AG04450 (cell line): ENCODE measurements at regions of chr14 and their contacts with region 1.

Region 1: GRCh38 chr14:76918751-76919543 is 92.7 kb downstream of the LRRC74A start:
- DNase-seq: peak; percentile 96
- H3K4me3 ChIP-seq: peak overlapping the region; percentile 23
- H3K27ac ChIP-seq: peak overlapping the region; percentile 98
- H3K27me3 ChIP-seq: no peaks in the 10 kb centered on the region
- CTCF ChIP-seq: no peak; the same call in 1 of the 2 replicates

Region 2: GRCh38 chr14:76701981-76702380 is 217.0 kb before region 1 on chr14:
- CTCF ChIA-PET with region 1: no interaction called
- POLR2A ChIA-PET with region 1: no interaction called
- DNase-seq: no peak
- H3K4me3 ChIP-seq: no peak overlapping the region
- H3K27ac ChIP-seq: no peak overlapping the region
- H3K27me3 ChIP-seq: no peaks in the 10 kb centered on the region
- CTCF ChIP-seq: no peak

Region 3: GRCh38 chr14:76863724-76864407 is 55.1 kb before region 1 on chr14:
- CTCF ChIA-PET with region 1: no interaction called
- POLR2A ChIA-PET with region 1: no interaction called
- DNase-seq: no peak
- H3K4me3 ChIP-seq: no peak overlapping the region
- H3K27ac ChIP-seq: no peak overlapping the region
- H3K27me3 ChIP-seq: peaks cover 38% of the 10 kb centered on the region
- CTCF ChIP-seq: no peak

Region 4: DNA sequence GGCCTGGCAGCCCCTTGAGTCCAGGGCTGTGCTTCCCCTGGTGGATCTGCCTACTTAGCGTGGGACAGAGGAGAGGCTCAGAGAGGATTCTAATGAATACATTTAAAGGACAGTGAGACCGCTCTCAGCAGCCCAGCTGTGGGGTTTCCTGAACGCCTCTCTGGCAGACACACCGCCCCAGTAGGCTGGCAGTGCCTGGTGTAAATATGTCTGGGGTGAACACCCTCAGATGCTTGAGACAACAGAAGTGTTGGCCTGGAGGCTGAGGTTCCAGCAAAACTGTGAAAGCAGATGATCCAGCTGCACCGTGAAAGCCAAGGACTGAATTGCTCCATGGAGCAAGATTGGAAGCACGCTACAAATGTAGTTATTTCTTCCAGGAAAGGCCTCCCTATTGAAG is 37.6 kb before region 1 on chr14:
- CTCF ChIA-PET with region 1: interaction called, 85 read pairs
- POLR2A ChIA-PET with region 1: no interaction called
- DNase-seq: no peak
- H3K4me3 ChIP-seq: no peak overlapping the region
- H3K27ac ChIP-seq: no peak overlapping the region
- H3K27me3 ChIP-seq: no peaks in the 10 kb centered on the region
- CTCF ChIP-seq: no peak

Region 5: DNA sequence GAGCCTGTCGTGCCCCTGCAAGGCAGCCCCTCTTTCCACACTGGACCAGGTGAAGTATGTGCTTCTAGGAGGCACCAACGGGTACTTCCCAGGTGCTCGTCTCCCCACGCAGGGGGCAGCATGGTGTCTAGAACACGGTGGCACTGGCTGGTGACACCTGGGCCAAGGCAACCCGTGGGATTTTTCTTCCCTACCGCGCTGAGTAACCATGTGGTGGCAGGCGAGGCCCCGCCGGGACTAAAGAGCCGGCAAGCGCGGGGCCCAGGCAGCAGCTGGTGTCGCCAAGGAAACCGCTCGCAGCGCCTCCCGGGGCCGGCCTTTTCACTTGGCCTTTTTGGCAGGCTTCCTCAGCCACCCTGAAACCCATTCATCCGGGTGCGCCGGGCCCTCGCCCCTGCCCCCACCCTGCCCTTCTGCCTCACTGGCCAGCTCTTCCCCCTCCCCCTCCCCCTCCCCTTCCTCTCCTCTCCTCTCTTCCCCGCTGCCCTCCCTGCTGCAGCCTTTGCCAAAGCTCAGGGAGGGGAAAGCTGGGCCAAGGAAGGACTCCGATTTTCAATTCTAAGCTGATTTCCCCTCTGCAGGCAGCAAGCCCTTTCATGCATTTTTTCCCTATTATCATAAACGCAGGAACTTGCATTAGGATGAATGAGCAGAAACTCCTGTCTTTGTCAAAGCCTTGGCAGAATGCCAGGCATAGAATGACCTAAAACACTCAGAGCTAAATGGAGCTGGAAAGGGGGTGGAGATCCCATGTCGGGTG is 28.3 kb after region 1 on chr14:
- CTCF ChIA-PET with region 1: interaction called, 26 read pairs
- POLR2A ChIA-PET with region 1: interaction called, 15 read pairs
- DNase-seq: peak; percentile 61
- H3K4me3 ChIP-seq: peak overlapping the region; percentile 22; the same call in 1 of the 2 replicates
- H3K27ac ChIP-seq: peak overlapping the region; percentile 93
- H3K27me3 ChIP-seq: no peaks in the 10 kb centered on the region
- CTCF ChIP-seq: peak; percentile 35; the same call in 1 of the 2 replicates

Region 6: GRCh38 chr14:76968621-76969063 is 49.7 kb after region 1 on chr14:
- CTCF ChIA-PET with region 1: interaction called, 16 read pairs
- POLR2A ChIA-PET with region 1: interaction called, 11 read pairs
- DNase-seq: no peak
- H3K4me3 ChIP-seq: no peak overlapping the region
- H3K27ac ChIP-seq: no peak overlapping the region
- H3K27me3 ChIP-seq: no peaks in the 10 kb centered on the region
- CTCF ChIP-seq: no peak

Region 7: DNA sequence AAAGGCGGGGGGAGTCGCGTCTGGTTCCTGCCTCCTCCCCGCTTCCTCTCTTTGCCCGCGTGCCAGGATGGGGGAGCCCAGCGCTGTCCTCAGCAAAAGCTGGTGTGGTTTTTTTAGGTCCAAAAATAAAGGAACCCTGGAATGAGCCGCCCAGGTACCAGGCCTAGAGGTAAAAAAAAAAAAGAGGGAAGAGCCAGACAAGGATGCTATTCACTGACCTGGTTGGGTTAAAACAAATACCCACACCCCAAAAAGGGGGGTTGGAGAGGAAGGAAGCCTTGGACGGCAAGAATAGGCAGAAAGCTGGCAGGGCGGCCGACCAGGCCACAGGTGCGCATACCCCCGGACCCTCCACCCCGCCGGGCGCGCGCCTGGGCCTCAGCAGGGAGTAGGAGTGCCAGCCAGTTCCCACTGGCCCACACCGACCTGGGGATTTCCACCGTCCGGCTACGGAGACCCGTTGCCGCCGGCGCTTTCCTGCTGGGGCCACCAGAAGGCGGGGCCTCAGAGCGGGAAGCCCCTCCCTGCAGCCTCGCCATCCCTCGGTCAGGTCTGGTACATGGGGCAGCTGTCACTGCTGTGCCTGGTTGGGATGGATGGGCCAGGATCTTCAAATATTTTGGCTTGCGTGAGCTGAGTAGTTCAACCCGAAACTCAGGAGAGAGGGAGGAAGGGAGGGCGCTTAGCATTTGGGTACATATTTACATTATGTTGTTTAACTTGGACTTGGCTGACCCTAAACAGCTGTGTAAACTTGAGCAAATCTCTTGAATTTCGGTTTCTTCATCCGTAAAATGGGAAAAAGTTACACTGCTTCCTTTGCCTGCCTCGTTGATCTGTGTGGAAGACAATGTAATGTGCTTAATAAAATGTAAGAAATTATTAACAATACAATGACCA is 114.9 kb after region 1 on chr14:
- CTCF ChIA-PET with region 1: interaction called, 156 read pairs
- POLR2A ChIA-PET with region 1: interaction called, 45 read pairs
- DNase-seq: peak; percentile 93
- H3K4me3 ChIP-seq: peak overlapping the region; percentile 66
- H3K27ac ChIP-seq: peak overlapping the region; percentile 100
- H3K27me3 ChIP-seq: no peaks in the 10 kb centered on the region
- CTCF ChIP-seq: no peak

Region 8: DNA sequence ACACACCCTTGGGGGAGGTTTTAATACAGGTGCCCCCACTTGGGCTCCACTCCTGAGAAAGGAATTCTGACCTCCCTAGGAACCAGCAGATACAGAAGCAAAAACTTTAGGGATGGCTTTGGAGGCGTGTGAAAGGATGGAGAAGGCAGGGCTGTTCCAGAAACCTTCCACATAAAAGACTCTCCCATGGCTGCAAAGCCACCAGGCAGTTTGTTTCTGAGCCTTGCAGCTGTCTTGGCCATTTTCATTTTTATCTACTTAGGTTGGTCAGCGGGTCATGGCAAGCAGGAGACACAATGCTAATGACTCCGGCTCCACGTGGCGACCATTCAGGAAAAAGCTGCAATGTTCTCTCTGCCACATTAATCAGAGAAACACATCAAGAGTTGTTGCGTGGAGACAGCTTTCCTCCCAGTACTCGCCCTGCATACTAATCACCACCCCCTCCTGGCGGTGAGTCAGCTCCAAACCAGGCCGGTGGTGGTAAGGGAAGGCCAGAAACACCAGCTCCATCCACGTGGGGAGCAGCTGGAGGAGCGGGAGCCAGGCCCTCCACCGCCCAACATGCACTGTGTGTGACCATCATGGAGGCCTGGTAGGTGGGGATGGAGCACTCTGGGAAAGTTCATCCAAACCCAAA is 140.4 kb after region 1 on chr14:
- CTCF ChIA-PET with region 1: interaction called, 111 read pairs
- POLR2A ChIA-PET with region 1: interaction called, 5 read pairs
- DNase-seq: no peak
- H3K4me3 ChIP-seq: no peak overlapping the region
- H3K27ac ChIP-seq: peak overlapping the region; percentile 61
- H3K27me3 ChIP-seq: no peaks in the 10 kb centered on the region
- CTCF ChIP-seq: peak; percentile 33; the same call in 1 of the 2 replicates

Region 9: GRCh38 chr14:77097700-77098528 is 179.0 kb after region 1 on chr14 and contains the start of gene CIPC:
- CTCF ChIA-PET with region 1: interaction called, 10 read pairs
- POLR2A ChIA-PET with region 1: no interaction called
- DNase-seq: peak; percentile 96
- H3K4me3 ChIP-seq: peak within 1 kb of the TSS; percentile 99
- H3K27ac ChIP-seq: peak within 1 kb of the TSS; percentile 73
- H3K27me3 ChIP-seq: no peaks in the 10 kb centered on the region
- CTCF ChIP-seq: no peak
- polyA plus RNA-seq, gene CIPC: 8.9 and 9.9 TPM in 2 replicates